MCF 10A (cell line): ENCODE measurements at regions of chr16 and their contacts with region 1.

Region 1: DNA sequence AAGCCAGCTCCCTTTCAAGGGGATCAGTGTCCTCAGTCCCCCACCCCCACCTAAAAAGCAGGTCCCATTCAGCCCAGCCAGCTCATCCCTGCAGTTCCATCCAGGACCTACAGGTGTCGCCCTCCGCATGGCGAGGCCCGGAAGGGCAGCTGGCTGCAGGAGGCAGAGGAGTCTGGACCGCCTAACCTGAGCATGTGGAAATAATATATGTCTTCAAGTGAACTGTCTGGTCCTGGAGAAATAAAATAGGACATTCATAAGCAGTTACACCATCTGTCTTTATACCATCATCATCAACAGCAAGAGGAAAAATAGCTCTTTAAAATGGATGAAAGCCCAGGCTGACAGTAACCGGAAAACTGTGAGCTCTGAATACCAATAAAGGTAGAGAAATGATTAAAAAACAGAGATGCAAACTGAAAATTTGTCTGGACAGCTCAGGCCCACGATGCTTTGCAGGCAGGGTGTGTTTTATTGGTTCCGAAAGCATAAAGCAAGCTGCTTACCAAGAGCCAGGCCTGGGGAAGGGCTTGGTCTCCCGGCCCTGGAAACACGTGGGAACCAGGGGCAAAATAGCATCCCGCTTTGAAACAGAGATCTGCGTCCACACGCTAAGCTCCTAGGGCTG is 215.2 kb downstream of the ZFHX3 start:
- DNase-seq: peak; percentile 80
- H3K4me3 Mint-ChIP-seq: no peak overlapping the region
- H3K27ac Mint-ChIP-seq: no peak overlapping the region
- H3K4me1 Mint-ChIP-seq: peaks cover 4% of the 10 kb centered on the region
- H3K27me3 Mint-ChIP-seq: no peaks in the 10 kb centered on the region
- CTCF ChIP-seq: peak; percentile 89

Region 2: GRCh38 chr16:72847187-72848027 is 14.7 kb after region 1 on chr16:
- CTCF ChIA-PET with region 1: interaction called, 29 read pairs
- POLR2A ChIA-PET with region 1: no interaction called
- intact Hi-C with region 1: no loop called
- DNase-seq: peak; percentile 25
- H3K4me3 Mint-ChIP-seq: no peak overlapping the region
- H3K27ac Mint-ChIP-seq: no peak overlapping the region
- H3K4me1 Mint-ChIP-seq: peaks cover 20% of the 10 kb centered on the region
- H3K27me3 Mint-ChIP-seq: no peaks in the 10 kb centered on the region
- CTCF ChIP-seq: no peak

Region 3: DNA sequence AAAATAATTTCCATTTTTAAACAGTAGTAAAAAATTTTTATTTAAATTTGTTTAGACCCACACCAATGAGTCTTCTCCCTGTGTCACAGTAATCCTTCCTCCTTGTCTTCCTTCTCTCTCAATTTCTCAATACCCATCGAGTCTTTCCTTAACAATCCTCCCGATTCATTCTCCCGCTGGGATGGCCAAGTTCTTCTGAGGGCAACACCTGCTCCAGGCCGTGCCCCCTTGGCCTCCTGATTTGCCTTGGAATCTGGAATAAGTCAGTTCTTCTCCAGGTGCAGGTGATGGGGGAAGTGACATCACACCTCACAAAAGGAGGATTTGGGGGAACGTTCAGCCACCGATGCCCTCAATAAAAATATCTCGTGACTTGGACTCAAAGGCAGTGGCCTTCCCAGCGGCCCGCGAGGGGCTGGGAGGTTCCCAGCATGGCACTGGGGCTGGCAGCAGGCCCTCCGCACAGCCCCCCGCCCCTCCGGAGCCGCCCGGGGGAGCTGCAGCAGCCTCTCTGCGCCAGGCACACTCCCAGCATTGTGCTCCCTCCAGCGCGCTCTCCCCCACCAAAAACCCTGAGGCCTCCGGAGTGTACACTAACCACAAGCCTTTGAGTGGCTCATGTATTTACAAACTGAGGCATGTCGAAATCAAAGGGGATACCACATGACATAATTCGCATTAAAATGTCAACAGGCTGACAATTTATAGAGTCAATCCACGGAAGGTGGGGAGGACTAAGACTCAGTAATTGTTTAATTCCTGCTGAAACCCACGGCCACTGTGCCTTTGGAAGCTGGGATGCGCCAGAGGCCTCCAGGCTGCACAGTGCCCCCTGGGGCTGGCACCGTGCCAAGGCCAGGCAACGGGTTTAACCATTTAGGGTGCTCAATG is 94.7 kb after region 1 on chr16:
- CTCF ChIA-PET with region 1: interaction called, 15 read pairs
- POLR2A ChIA-PET with region 1: no interaction called
- intact Hi-C with region 1: no loop called
- DNase-seq: peak; percentile 94
- H3K4me3 Mint-ChIP-seq: no peak overlapping the region
- H3K27ac Mint-ChIP-seq: no peak overlapping the region
- H3K4me1 Mint-ChIP-seq: peaks cover 9% of the 10 kb centered on the region
- H3K27me3 Mint-ChIP-seq: no peaks in the 10 kb centered on the region
- CTCF ChIP-seq: no peak

Region 4: DNA sequence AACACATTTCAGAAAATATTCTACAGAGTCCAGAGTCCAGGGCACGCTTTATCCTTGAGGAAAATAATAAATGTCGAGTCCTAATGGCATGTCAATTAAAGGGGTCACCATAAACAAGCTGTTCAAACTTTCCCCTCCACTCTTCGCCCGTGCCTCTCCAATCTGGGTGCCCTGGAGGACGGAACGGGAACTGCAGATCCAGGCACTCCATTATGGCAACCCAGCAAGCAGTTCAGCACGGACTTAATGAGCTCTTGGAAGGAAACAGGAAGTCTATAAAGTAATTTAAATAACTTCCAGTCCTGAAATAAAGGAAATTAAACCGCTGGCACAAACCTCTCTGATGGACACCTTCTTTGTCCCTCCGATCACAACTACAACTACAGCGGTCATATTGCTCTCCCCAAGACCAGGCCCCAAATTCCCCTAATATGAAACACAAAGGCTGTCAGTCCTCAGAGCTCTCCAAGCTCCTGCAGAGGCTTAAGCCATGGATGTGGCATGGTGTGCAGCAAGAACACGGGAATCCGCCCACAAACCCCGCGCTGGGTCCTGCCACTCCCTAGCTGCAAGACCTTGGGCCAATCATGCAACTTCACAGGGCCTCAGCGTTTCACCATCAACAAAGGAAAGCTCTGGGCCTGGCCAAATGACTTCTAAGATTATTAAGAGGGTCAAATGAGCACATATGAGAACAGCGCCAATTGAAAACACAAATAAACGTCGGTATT is 162.6 kb after region 1 on chr16:
- CTCF ChIA-PET with region 1: interaction called, 22 read pairs
- POLR2A ChIA-PET with region 1: no interaction called
- intact Hi-C with region 1: no loop called
- DNase-seq: no peak
- H3K4me3 Mint-ChIP-seq: no peak overlapping the region
- H3K27ac Mint-ChIP-seq: no peak overlapping the region
- H3K4me1 Mint-ChIP-seq: peaks cover 60% of the 10 kb centered on the region
- H3K27me3 Mint-ChIP-seq: no peaks in the 10 kb centered on the region
- CTCF ChIP-seq: peak; percentile 26

Region 5: DNA sequence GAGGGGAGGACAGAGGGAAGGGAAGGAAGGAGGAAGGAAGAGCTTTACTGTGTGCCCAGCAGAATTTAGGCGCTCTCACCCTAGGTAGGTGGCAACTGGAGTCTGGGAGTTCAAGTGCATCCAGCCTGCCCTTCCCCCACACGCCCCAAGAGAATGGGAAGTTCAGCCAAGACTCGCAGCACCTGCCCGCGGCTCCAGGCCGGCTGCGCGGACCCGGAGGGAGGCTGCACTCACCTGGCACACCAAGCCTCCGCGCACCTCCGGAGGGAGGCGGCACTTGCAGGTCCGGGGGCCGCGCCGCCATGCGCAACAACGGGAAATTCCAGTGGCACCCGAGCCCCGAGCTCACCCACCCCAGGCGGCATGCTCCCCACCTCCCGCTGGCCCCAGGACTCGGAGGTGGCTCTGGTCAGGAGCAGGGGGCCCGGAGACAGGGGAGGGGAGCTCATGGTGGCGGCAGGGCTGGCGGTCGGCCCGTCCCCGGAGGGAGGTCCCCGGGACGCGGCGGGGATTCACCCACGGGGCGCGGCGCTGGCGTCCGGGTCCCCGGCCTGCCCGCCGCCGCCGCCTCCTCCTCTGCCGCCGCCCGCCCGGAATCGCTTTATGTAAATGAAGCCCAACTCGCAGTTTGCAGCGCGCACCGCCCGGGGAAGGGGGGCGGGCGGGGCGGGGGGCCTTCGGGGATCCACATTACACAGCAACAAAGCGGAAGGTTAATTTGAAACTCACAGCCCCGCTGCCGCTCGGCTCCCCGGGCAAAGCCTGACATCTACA is 215.0 kb after region 1 on chr16 and contains the start of gene ZFHX3:
- CTCF ChIA-PET with region 1: interaction called, 33 read pairs
- POLR2A ChIA-PET with region 1: interaction called, 9 read pairs
- intact Hi-C with region 1: loop called (anchors 1 kb)
- DNase-seq: peak; percentile 75
- H3K4me3 Mint-ChIP-seq: peak within 1 kb of the TSS; percentile 89
- H3K27ac Mint-ChIP-seq: peak within 1 kb of the TSS; percentile 73
- H3K4me1 Mint-ChIP-seq: peaks cover 46% of the 10 kb centered on the region
- H3K27me3 Mint-ChIP-seq: no peaks in the 10 kb centered on the region
- CTCF ChIP-seq: peak; percentile 18
- total RNA-seq, gene ZFHX3: 21.1 and 27.4 TPM in 2 replicates

Region 6: DNA sequence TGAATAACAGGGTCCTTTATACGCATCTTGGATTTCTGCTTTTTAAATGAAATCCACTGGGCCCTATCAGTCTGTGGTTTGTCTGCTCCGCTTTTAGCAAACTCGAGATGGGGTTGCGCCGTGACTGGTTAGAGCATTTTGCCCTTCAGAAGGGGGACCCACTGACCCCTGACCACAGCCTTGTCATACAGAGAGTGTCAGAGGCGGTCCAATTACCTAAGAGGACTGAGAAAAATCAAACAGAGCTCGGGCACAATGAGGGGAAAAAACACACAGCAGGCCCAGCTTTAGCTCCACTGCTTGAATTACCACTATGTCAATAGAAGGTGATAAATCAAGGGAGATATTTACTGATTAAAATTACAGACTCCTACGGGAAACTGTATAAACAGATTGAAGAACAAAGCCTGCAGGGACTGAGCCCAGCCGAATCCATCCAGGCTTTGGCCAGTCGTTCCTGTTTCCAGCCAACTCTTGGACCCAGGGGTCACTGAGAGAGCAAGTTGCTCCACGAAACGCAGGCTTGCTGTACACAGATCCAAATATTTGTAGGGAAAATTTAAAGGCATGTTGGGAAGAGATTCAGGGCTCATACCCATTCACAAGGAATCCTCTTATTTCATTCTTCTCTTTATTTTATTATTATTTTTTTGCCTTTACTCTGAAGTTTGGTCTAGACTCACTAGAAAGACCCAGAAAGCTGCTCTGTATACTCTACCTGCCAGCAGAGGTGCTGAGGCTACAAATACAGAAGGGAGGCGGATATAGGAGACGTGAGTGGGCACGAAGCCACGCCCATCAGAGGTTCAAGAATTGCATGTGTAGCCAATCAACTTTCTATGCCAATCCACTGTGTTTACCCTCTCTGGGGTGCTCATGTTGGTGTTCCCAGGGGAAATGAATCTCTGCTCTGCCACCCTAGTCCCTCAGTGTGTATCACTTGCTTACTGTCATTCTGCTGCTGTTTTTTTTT is 347.3 kb after region 1 on chr16:
- CTCF ChIA-PET with region 1: interaction called, 12 read pairs
- POLR2A ChIA-PET with region 1: no interaction called
- intact Hi-C with region 1: loop called (anchors 5 kb)
- DNase-seq: no peak
- H3K4me3 Mint-ChIP-seq: no peak overlapping the region
- H3K27ac Mint-ChIP-seq: no peak overlapping the region
- H3K4me1 Mint-ChIP-seq: peaks cover 15% of the 10 kb centered on the region
- H3K27me3 Mint-ChIP-seq: no peaks in the 10 kb centered on the region
- CTCF ChIP-seq: no peak

Region 7: DNA sequence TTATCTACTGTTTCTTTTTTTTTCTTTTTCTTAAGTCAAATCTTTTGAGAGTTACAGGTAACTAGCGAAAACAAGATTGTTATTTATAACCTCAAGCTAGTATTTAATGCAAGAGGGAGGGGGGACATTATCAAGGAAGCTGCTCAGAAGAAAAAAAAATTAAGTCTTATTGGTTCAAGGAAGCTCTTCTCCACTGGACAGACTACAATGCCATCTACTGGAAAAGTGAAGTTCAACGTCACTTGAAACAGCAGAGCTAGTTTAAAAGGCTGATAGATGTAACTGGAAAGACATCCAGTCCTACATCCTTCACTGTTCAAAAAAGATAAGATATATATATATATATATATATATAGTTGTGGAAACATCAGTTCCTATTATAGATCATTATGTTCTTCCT is 1045.9 kb after region 1 on chr16:
- CTCF ChIA-PET with region 1: interaction called, 15 read pairs
- POLR2A ChIA-PET with region 1: no interaction called
- intact Hi-C with region 1: no loop called
- DNase-seq: peak; percentile 64
- H3K4me3 Mint-ChIP-seq: no peak overlapping the region
- H3K27ac Mint-ChIP-seq: no peak overlapping the region
- H3K4me1 Mint-ChIP-seq: no peaks in the 10 kb centered on the region
- H3K27me3 Mint-ChIP-seq: peaks cover 83% of the 10 kb centered on the region
- CTCF ChIP-seq: peak; percentile 60